ENCODE measurements at regions of chr1 and their contacts with region 1.

Region 1: DNA sequence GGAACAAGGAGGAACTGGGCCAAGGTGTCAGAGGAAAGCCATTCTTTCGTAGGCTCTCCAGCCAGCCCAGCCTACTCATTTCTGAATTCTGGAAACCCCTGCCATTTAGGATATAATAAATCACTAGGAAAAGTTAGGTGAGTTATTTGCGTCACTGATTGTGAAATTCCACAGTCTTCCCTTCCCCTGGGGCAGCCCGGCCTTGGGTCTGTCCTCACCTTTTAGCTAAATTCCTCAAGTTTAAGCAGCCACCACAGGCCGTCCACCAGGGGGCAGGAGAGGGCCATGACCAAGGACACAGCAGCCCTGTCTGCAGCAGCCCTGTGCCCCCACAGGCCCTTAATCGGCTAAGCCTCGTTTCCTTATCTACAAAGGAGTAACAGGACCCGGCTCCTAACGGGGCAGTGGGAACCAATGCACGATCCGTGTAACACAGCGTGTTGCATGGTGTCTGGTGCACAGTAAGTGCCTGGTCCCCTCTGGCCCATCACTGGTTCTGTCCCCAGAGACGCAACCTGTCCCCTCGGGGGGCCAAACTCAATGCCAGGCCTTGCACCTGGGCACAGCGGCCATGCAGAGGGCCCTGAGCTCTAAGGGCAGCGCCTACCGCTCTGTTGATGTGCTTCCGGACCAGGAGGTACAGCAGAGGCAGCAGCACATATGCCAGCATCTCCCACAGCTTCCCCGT is 18.1 kb downstream of the GPR157 start:
- DNase-seq: peak; percentile 93
- ATAC-seq: peak; percentile 75
- H3K4me3 Mint-ChIP-seq: no peak overlapping the region
- H3K27ac Mint-ChIP-seq: no peak overlapping the region
- H3K4me1 Mint-ChIP-seq: peaks cover 5% of the 10 kb centered on the region
- H3K27me3 Mint-ChIP-seq: no peaks in the 10 kb centered on the region

Region 2: GRCh38 chr1:9086045-9086444 is 24.8 kb before region 1 on chr1:
- CTCF ChIA-PET with region 1: no interaction called
- POLR2A ChIA-PET with region 1: no interaction called
- intact Hi-C with region 1: no loop called
- DNase-seq: no peak
- ATAC-seq: no peak
- H3K4me3 Mint-ChIP-seq: no peak overlapping the region
- H3K27ac Mint-ChIP-seq: no peak overlapping the region
- H3K4me1 Mint-ChIP-seq: peaks cover 8% of the 10 kb centered on the region
- H3K27me3 Mint-ChIP-seq: peaks cover 6% of the 10 kb centered on the region

Region 3: DNA sequence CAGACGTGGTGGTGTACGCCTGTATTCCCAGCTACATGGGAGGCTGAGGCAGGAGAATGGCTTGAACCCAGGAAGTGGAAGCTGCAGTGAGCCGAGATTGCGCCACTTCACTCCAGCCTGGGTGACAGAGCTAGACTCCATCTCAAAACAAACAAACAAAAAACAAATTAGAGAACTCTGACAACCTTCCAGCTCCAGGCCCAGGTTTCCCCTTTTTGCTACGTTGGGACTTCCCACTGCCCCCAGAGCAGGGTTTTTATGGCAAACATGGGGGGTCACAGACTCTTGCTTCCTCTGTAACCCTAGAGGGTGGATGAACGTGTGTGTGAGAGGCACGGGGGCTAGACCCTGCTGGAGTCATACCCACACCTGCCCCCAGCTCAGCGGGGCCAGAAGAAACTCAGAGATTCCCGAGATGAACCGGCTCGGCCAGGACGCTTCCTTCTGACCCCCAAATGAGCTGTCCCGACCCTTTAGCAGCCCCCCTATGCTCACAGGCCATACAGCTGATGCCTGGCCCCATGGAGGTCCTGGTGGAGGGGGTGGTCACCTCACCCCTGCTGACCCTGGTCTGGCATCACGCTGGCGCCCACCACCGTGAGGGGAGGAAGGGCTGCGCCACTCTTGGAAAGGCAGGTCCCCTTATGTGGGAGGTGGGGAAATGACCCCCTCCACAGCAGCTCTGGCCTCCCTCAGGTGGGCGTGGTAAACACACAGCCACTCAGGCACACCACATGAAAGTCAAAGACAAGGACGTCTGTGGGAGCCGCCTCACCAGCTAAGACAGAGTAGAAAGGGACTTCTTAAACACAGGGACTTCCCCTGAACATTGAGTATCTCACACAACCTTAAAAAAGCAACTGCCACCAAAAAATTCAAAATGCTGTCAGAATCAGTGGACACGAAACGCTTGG is 10.9 kb after region 1 on chr1:
- CTCF ChIA-PET with region 1: interaction called, 11 read pairs
- POLR2A ChIA-PET with region 1: no interaction called
- intact Hi-C with region 1: no loop called
- DNase-seq: peak; percentile 67
- ATAC-seq: peak; percentile 96
- H3K4me3 Mint-ChIP-seq: peak overlapping the region; percentile 25
- H3K27ac Mint-ChIP-seq: peak overlapping the region; percentile 15
- H3K4me1 Mint-ChIP-seq: peaks cover 25% of the 10 kb centered on the region
- H3K27me3 Mint-ChIP-seq: no peaks in the 10 kb centered on the region

Region 4: DNA sequence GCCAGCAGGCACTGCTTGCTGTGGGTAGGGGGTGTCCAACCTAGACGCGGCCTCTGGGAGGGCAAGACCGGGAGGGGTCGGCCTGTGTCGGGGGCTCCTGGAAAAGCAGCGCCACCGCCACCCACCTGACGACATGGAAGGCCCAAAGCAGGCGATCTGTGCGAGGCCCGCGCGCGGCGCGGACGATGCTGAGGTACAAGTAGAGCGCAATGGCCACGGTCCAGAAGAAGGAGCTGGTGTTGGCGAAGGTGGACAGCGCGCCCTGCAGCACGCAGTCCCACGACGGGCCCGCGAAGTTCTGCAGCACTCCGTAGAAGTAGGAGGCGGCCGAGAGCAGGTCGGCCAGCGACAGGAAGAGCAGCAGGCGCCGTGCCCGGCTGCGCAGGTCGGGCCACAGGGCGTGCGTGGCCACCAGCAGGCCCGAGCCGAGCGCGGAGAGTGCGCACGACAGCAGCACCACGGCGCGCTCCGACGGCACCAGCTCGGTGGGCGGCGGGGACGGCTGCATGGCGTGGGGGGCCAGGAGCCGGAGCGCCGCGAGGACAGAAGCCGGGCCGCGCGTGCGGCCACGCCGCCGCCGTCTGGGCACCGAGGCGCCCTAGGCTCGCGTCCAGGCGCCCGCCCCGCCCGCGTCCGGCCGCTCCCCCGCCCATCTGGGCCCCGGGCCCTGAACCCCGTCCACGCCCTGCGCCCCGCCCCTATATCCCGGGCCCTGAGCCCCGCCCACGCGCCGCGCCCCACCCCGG is 17.9 kb after region 1 on chr1 and contains the start of gene GPR157:
- CTCF ChIA-PET with region 1: interaction called, 10 read pairs
- POLR2A ChIA-PET with region 1: no interaction called
- intact Hi-C with region 1: no loop called
- DNase-seq: peak; percentile 93
- ATAC-seq: peak; percentile 84
- H3K4me3 Mint-ChIP-seq: peak within 1 kb of the TSS; percentile 83
- H3K27ac Mint-ChIP-seq: peak within 1 kb of the TSS; percentile 67
- H3K4me1 Mint-ChIP-seq: peaks cover 37% of the 10 kb centered on the region
- H3K27me3 Mint-ChIP-seq: no peaks in the 10 kb centered on the region
- total RNA-seq, gene GPR157: 2.7 to 3.6 TPM

Region 5: DNA sequence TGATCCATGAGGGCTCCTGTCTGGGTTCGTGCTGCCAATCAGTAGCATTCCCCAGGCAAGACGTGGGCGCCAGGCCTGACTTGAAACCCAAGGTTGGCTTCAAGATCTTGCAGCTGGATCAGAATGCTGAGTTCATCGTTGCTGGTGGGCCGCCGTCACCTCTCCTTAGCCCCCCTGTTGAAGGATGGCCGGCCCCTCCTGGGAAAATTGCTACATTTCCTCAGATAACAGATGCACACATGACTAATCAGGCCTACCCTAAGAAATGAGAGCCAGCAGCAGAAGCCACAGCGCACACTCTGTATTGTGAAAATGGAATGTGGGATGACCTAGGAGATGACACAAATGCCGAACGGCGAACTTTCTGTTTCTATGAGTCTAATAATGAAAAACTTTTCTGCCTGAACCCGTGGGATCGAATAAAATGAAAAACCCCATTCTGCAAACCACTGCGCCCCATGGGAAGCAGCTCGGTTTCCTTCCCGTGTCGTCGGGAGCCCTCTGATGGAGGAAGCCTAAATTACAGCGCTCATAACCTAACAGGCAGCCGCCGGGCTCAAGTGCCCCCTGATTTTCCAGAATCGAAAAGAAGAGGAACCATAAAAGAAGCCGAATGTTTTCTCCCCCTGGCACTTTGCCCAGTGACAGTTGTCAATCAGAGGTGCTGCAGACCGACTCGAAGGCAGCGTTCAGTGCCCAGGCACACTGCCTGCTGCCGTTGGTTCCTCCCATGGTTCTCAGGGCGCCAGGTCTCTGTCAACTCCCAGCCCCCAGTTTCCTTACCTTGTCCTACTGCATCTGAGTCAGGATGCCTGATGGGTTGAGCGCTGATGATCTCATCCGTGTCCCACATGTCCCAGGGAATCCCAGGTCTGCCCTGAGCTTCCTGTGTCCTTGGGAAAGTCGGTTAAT is 85.6 kb after region 1 on chr1:
- CTCF ChIA-PET with region 1: interaction called, 40 read pairs
- POLR2A ChIA-PET with region 1: no interaction called
- intact Hi-C with region 1: loop called (anchors 1 kb)
- DNase-seq: peak; percentile 83
- ATAC-seq: peak; percentile 84
- H3K4me3 Mint-ChIP-seq: no peak overlapping the region
- H3K27ac Mint-ChIP-seq: no peak overlapping the region
- H3K4me1 Mint-ChIP-seq: peaks cover 19% of the 10 kb centered on the region
- H3K27me3 Mint-ChIP-seq: peaks cover 45% of the 10 kb centered on the region

Region 6: GRCh38 chr1:9249534-9250410 is 139.0 kb after region 1 on chr1:
- CTCF ChIA-PET with region 1: interaction called, 6 read pairs
- POLR2A ChIA-PET with region 1: no interaction called
- intact Hi-C with region 1: loop called in 1 of 2 experiments (anchors 1 kb)
- DNase-seq: peak; percentile 68
- ATAC-seq: peak; percentile 79
- H3K4me3 Mint-ChIP-seq: no peak overlapping the region
- H3K27ac Mint-ChIP-seq: no peak overlapping the region
- H3K4me1 Mint-ChIP-seq: peaks cover 6% of the 10 kb centered on the region
- H3K27me3 Mint-ChIP-seq: no peaks in the 10 kb centered on the region

Measured in activated CD4-positive, alpha-beta T cell treated with anti-CD3 and anti-CD28 coated beads for 36 hours (primary cell).